Caco-2 (cell line): ENCODE measurements at regions of chr16 and their contacts with region 1.

Region 1: GRCh38 chr16:75789237-75789636 is 62.9 kb upstream of the CPHXL start:
- DNase-seq: peak in 1 of 2 experiments; percentile 65
- H3K4me3 ChIP-seq: no peak overlapping the region
- H3K4me3 Mint-ChIP-seq: no peak overlapping the region
- H3K27ac Mint-ChIP-seq: peak overlapping the region; percentile 17
- H3K4me1 ChIP-seq: no peaks in the 10 kb centered on the region
- H3K4me1 Mint-ChIP-seq: peaks cover 5% of the 10 kb centered on the region
- H3K27me3 ChIP-seq: no peaks in the 10 kb centered on the region
- H3K27me3 Mint-ChIP-seq: peaks cover 2% of the 10 kb centered on the region
- CTCF ChIP-seq: peak; percentile 81 to 90

Region 2: DNA sequence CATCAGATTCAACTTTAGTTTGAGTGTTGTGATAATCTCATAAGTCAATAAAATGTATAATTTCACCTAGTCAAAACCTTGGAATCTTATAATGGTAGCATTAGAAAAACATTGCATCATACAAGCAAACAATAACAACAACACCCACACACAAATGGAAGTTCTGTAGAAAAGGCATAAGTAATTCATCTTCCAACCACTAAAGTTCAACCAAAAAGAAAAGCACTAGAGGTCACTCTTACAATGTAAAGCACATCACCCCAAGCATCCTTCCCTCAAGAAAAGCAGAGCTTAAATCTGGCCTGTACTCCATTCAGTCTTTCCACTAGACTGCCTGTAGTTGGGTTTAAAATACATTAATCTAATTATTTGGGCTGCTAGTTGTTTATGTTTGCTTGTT is 489.7 kb after region 1 on chr16:
- CTCF ChIA-PET with region 1: no interaction called
- POLR2A ChIA-PET with region 1: no interaction called
- intact Hi-C with region 1: loop called (anchors 1 kb)
- DNase-seq: peak in 1 of 2 experiments; percentile 26
- H3K4me3 ChIP-seq: no peak overlapping the region
- H3K4me3 Mint-ChIP-seq: no peak overlapping the region
- H3K27ac Mint-ChIP-seq: no peak overlapping the region
- H3K4me1 ChIP-seq: no peaks in the 10 kb centered on the region
- H3K4me1 Mint-ChIP-seq: no peaks in the 10 kb centered on the region
- H3K27me3 ChIP-seq: no peaks in the 10 kb centered on the region
- H3K27me3 Mint-ChIP-seq: no peaks in the 10 kb centered on the region
- CTCF ChIP-seq: peak; percentile 32 to 44

Region 3: GRCh38 chr16:76639685-76640289 is 850.5 kb after region 1 on chr16:
- CTCF ChIA-PET with region 1: no interaction called
- POLR2A ChIA-PET with region 1: no interaction called
- intact Hi-C with region 1: loop called (anchors 1 kb)
- DNase-seq: peak; percentile 64 to 70
- H3K4me3 ChIP-seq: no peak overlapping the region
- H3K4me3 Mint-ChIP-seq: no peak overlapping the region
- H3K27ac Mint-ChIP-seq: no peak overlapping the region
- H3K4me1 ChIP-seq: no peaks in the 10 kb centered on the region
- H3K4me1 Mint-ChIP-seq: no peaks in the 10 kb centered on the region
- H3K27me3 ChIP-seq: no peaks in the 10 kb centered on the region
- H3K27me3 Mint-ChIP-seq: no peaks in the 10 kb centered on the region
- CTCF ChIP-seq: peak; percentile 48 to 69